ENCODE measurements at regions of chr13 and their contacts with region 1.

Region 1: GRCh38 chr13:99656092-99656745 is 154.9 kb downstream of the TM9SF2 start:
- DNase-seq: peak; percentile 79 to 85 (median 81)
- H3K4me3 ChIP-seq: peak overlapping the region in 1 of 2 donors; percentile 43
- H3K4me3 Mint-ChIP-seq: peak overlapping the region; percentile 74 to 88 (median 86)
- H3K27ac ChIP-seq: peak overlapping the region; percentile 76
- H3K27ac Mint-ChIP-seq: peak overlapping the region; percentile 88 to 96 (median 95)
- H3K4me1 ChIP-seq: peaks cover 56% of the 10 kb centered on the region
- H3K4me1 Mint-ChIP-seq: peaks cover 33 to 55% (median 42%) of the 10 kb centered on the region in 4 donors
- H3K27me3 ChIP-seq: no peaks in the 10 kb centered on the region
- H3K27me3 Mint-ChIP-seq: no peaks in the 10 kb centered on the region

Region 2: DNA sequence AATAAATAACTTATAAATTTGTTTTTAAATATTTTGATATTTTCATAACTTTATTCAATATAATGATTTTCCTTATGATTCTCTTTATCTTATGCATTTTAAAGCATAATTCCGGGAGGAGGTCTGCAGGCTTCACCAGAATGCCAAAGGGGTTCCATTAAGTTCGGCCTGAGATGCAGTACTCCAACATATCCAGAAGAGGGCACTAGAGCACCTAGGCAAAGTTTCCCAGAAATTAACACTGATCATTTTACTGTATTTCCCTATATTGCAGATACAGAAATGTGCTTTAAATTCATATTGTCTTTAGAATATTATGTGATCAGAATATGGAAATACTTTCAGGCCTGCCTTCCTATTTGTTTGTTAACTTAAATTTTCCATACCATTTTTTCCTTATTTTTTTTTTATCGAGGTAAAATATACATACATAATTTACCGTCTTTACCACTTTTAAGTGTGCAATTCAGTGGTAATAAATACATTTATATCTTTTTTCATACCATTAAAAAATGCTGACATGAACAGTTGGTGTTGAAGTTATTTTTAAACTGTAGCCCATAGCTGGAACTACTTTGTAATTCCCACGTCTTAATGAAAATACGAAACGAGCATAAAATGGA is 213.8 kb before region 1 on chr13:
- CTCF ChIA-PET with region 1: interaction called, 3 read pairs
- POLR2A ChIA-PET with region 1: interaction called, 4 read pairs
- intact Hi-C with region 1: loop called (anchors 1 kb)
- DNase-seq: peak; percentile 66 to 74 (median 71)
- H3K4me3 ChIP-seq: no peak overlapping the region
- H3K4me3 Mint-ChIP-seq: no peak overlapping the region
- H3K27ac ChIP-seq: no peak overlapping the region
- H3K27ac Mint-ChIP-seq: peak overlapping the region in 1 of 7 donors; percentile 9
- H3K4me1 ChIP-seq: peaks cover 3% of the 10 kb centered on the region
- H3K4me1 Mint-ChIP-seq: peaks cover 4 to 10% (median 6%) of the 10 kb centered on the region in 4 donors
- H3K27me3 ChIP-seq: no peaks in the 10 kb centered on the region
- H3K27me3 Mint-ChIP-seq: peaks cover 1 to 3% of the 10 kb centered on the region in 2 donors

Region 3: DNA sequence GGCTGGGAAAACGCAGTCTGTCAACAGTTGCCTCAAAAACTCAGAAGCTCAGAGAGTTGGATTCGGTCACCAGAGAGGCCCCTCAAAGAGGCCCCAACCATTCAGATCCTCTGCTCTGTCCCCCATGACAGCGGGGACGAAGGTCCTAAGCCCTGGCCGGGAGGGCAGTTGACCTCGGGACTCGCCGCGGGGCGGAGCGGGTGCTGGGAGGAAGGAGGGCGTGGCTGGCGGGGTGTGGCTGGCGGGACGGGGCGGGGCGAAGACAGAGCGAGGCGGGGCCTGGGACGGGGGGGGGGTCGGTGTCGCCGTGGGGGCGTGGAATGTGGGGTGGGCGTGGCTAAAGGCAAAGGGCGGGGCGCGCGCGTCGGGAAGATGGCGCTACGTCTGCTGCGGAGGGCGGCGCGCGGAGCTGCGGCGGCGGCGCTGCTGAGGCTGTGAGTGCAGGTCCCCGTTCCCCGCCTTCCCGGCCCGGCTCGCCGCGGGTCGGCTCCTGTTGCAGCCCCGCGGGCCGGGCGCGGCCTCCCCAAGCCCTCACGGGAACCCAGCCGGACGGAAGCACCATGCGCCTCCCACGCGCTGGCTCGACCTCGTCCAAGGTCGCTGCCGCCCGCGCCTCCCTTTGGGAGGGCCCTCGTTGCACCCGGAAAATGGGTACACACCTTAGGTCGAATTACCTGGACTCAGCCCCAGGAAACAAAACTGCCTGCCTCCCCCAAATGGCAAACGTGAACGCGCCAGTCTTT is 49.7 kb before region 1 on chr13:
- CTCF ChIA-PET with region 1: interaction called, 15 read pairs
- POLR2A ChIA-PET with region 1: interaction called, 17 read pairs
- intact Hi-C with region 1: loop called (anchors 2 kb)
- DNase-seq: peak; percentile 87 to 90 (median 89)
- H3K4me3 ChIP-seq: peak within 1 kb of the TSS; percentile 53 to 78
- H3K4me3 Mint-ChIP-seq: peak within 1 kb of the TSS; percentile 88 to 97 (median 90)
- H3K27ac ChIP-seq: peak within 1 kb of the TSS; percentile 71
- H3K27ac Mint-ChIP-seq: peak within 1 kb of the TSS; percentile 91 to 96 (median 95)
- H3K4me1 ChIP-seq: peaks cover 35% of the 10 kb centered on the region
- H3K4me1 Mint-ChIP-seq: peaks cover 28 to 59% (median 46%) of the 10 kb centered on the region in 4 donors
- H3K27me3 ChIP-seq: no peaks in the 10 kb centered on the region
- H3K27me3 Mint-ChIP-seq: no peaks in the 10 kb centered on the region

Region 4: GRCh38 chr13:99898421-99898820 is 242.2 kb after region 1 on chr13:
- CTCF ChIA-PET with region 1: interaction called, 20 read pairs
- POLR2A ChIA-PET with region 1: interaction called, 3 read pairs
- intact Hi-C with region 1: no loop called
- DNase-seq: no peak
- H3K4me3 ChIP-seq: no peak overlapping the region
- H3K4me3 Mint-ChIP-seq: peak overlapping the region in 2 of 8 donors; percentile 7 to 32
- H3K27ac ChIP-seq: no peak overlapping the region
- H3K27ac Mint-ChIP-seq: peak overlapping the region in 1 of 7 donors; percentile 24
- H3K4me1 ChIP-seq: no peaks in the 10 kb centered on the region
- H3K4me1 Mint-ChIP-seq: peaks cover 9 to 22% (median 13%) of the 10 kb centered on the region in 4 donors
- H3K27me3 ChIP-seq: peaks cover 19% of the 10 kb centered on the region
- H3K27me3 Mint-ChIP-seq: peaks cover 48 to 50% of the 10 kb centered on the region in 2 donors

Region 5: GRCh38 chr13:99980201-99980823 is 324.1 kb after region 1 on chr13:
- CTCF ChIA-PET with region 1: no interaction called
- POLR2A ChIA-PET with region 1: interaction called, 6 read pairs
- intact Hi-C with region 1: loop called (anchors 5 kb)
- DNase-seq: peak in 4 of 5 donors; percentile 44 to 60 (median 55)
- H3K4me3 ChIP-seq: no peak overlapping the region
- H3K4me3 Mint-ChIP-seq: no peak overlapping the region
- H3K27ac ChIP-seq: no peak overlapping the region
- H3K27ac Mint-ChIP-seq: peak overlapping the region in 1 of 7 donors; percentile 90
- H3K4me1 ChIP-seq: peaks cover 37% of the 10 kb centered on the region
- H3K4me1 Mint-ChIP-seq: peaks cover 4 to 35% (median 16%) of the 10 kb centered on the region in 4 donors
- H3K27me3 ChIP-seq: peaks cover 78% of the 10 kb centered on the region
- H3K27me3 Mint-ChIP-seq: peaks cover 56 to 58% of the 10 kb centered on the region in 2 donors

Region 6: DNA sequence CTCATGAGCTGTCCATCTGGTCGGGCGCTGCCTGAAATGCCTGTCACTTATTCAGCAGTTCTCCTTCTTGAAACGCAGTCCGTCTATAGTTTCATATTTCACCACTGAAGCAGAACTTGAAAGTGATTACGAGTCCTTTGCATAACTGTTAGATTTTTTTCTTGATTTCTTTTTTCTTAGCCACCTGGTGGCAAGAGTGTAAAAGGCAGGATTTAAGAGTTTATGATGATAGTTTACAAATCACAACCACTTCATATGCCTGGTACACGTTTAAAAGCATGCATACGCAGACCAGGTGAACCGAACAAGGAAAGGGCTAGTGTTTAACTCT is 886.6 kb after region 1 on chr13:
- CTCF ChIA-PET with region 1: interaction called, 6 read pairs
- POLR2A ChIA-PET with region 1: no interaction called
- intact Hi-C with region 1: loop called (anchors 1 kb)
- DNase-seq: peak in 4 of 5 donors; percentile 33 to 40 (median 36)
- H3K4me3 ChIP-seq: peak overlapping the region in 1 of 2 donors; percentile 11
- H3K4me3 Mint-ChIP-seq: peak overlapping the region in 6 of 8 donors; percentile 33 to 78 (median 52)
- H3K27ac ChIP-seq: no peak overlapping the region
- H3K27ac Mint-ChIP-seq: peak overlapping the region in 2 of 7 donors; percentile 49 to 59
- H3K4me1 ChIP-seq: peaks cover 22% of the 10 kb centered on the region
- H3K4me1 Mint-ChIP-seq: peaks cover 3 to 37% (median 24%) of the 10 kb centered on the region in 4 donors
- H3K27me3 ChIP-seq: no peaks in the 10 kb centered on the region
- H3K27me3 Mint-ChIP-seq: no peaks in the 10 kb centered on the region

Region 7: DNA sequence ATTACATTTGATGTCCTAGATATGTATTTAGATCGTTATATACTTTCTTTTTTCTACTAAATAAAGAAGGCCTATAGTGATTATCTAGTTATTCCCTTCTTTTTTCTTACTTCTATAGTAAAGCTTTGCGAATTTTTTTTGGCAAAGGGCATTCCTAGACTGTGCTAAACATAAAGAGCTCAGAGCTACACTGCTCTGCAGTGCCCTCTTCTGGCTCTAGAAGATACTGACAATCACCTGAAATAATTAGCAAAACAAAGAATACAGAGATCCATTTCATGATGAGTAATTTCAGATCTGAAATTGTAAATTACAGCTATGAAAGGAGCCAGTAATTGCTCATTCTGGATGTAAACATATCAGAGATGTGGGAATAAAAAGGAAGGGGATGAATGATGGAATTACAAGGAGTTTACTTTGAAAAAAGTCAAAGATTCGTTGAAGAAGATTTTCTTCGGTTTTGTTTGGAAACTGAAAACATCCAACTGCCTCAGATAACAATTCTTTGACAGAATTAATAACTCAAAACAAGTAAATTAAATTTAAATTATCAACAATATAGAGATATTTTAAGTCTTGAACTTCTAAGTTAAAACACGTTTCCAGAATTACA is 1471.6 kb after region 1 on chr13:
- CTCF ChIA-PET with region 1: interaction called, 15 read pairs
- POLR2A ChIA-PET with region 1: interaction called, 3 read pairs
- intact Hi-C with region 1: loop called (anchors 1 kb)
- DNase-seq: peak in 4 of 5 donors; percentile 17 to 41 (median 26)
- H3K4me3 ChIP-seq: no peak overlapping the region
- H3K4me3 Mint-ChIP-seq: no peak overlapping the region
- H3K27ac ChIP-seq: no peak overlapping the region
- H3K27ac Mint-ChIP-seq: no peak overlapping the region
- H3K4me1 ChIP-seq: no peaks in the 10 kb centered on the region
- H3K4me1 Mint-ChIP-seq: peaks cover 0 to 3% (median 1%) of the 10 kb centered on the region in 4 donors
- H3K27me3 ChIP-seq: no peaks in the 10 kb centered on the region
- H3K27me3 Mint-ChIP-seq: peaks cover 2 to 3% of the 10 kb centered on the region in 2 donors